PC-9 (cell line): ENCODE measurements at regions of chr10 and their contacts with region 1.

Region 1: DNA sequence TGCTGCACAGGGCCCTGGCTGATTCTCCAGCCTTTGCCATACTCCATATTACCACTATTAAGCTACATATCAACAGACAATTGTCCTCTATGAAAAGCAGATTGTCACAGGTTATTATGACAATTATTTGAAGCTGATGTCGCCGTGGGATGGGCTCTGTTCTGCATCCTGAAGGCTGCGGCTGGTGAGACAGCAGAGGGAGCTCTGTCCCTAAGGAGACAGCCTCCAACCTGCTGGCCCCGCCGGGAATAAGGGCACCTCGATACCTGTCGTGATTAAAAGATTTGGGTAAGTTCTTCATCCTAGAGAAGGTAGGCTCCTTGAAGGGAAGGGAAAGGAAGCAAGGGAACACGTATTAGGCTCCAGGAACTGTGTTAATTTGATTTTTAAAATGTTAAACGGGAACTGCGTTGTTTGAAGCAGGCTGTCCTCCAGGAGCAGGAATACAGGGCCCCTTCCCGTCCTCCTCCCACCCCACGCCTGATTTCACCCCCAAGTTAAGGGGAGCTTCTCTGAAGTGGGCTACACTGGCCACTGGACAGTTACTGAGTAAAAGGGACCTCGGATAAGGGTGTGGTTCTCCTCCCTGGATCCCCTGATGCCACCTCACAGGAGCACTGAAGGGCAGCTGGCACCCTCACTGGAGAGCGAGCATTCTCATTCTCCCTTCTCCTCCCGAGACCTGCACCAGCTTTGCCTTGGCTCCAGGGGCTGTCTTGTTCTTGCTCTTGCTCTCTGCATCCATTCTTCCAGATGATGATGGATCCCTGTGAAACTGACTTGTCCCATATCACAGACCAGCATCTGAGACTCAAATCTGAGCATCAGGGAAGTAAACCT is 11.8 kb upstream of the TIAL1 start:
- DNase-seq: peak; percentile 41 to 52
- H3K4me3 ChIP-seq: no peak overlapping the region
- H3K27ac ChIP-seq: no peak overlapping the region
- H3K4me1 ChIP-seq: no peaks in the 10 kb centered on the region
- H3K27me3 ChIP-seq: no peaks in the 10 kb centered on the region
- CTCF ChIP-seq: peak; percentile 71

Region 2: DNA sequence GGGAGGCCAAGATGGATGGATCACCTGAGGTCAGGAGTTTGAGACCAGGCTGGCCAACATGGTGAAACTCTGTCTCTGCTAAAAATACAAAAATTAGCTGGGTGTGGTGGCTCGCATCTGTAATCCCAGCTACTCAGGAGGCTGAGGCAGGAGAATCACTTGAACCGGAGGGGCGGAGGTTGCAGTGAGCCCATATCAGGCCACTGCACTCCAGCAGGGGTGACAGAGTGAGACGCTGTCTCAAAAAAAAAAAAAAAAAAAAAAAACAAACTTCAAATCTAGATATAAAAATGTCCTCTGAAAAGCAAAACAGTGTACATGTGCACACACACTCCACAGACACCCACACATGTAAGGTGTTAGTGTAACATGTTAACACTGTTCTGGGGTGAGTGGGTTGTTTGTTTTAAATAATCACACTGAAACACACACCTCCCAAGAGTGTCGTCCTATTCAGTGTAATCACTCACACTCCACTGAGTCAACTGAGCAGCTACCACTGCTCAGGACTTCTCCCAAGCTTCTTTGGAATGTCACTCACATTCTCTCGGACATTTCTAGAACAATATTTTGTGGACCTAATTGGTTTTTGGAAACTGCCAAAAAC is 53.3 kb before region 1 on chr10:
- CTCF ChIA-PET with region 1: no interaction called
- POLR2A ChIA-PET with region 1: no interaction called
- intact Hi-C with region 1: no loop called
- DNase-seq: no peak
- H3K4me3 ChIP-seq: no peak overlapping the region
- H3K27ac ChIP-seq: no peak overlapping the region
- H3K4me1 ChIP-seq: no peaks in the 10 kb centered on the region
- H3K27me3 ChIP-seq: no peaks in the 10 kb centered on the region
- CTCF ChIP-seq: no peak

Region 3: DNA sequence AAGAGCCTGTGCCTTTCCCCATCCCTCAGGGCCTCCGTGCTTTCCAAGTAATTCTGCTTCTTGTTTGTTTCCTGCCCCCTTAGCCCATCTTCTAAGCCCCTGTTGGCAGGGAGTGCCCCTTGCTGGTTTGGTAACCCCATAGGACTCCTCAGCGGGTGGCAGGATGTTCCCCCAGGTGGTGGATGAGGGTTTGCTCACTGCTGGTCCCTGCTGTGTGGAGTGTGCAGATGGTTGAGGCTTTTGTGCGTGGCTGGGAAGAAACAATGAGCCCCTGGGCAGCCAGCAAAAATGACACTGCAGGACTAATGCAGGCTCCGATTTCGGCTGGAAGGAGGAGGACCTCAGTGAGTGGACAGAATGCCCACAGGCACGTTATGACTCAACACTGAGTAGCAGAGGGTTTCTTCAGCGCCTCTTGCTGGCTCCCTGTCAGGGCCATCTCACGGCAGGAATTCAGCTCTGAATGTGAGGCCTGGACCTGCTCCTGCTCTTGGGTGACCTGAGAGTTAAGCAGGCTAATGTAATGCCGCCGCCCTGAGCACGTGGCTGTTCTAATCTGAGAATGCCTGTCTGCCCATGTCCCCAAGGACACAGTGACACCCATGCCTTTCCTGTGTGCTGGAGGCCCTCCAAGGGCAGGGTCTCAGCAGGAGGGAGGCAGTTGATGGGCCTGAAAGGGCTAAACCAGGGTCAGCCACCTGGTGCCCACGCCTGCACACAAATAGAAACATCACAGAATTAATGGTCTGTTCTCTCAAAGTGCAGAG is 59.2 kb after region 1 on chr10:
- CTCF ChIA-PET with region 1: no interaction called
- POLR2A ChIA-PET with region 1: no interaction called
- intact Hi-C with region 1: loop called (anchors 5 kb)
- DNase-seq: peak; percentile 88 to 93
- H3K4me3 ChIP-seq: peak overlapping the region; percentile 31; the same call in 1 of the 2 replicates
- H3K27ac ChIP-seq: peak overlapping the region; percentile 90
- H3K4me1 ChIP-seq: peaks cover 90% of the 10 kb centered on the region
- H3K27me3 ChIP-seq: no peaks in the 10 kb centered on the region
- CTCF ChIP-seq: no peak

Region 4: DNA sequence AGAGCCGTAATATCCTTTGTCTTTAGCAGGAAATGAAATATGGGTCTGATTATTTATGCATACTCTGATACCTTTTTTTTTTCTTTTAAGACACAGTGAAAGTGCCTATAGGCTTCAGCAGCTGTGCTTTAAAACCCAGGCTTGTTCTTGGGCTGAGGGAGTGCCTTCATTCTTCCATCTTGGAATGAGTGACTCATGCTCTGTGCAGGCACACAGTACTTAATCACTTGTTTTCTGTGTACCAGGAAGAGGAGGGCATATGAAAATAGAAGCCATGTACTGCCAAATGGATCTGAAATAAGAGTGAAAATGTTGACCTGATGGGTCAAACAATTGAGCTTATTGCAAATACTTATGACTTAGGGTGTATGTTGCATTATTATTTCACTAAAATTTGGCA is 129.3 kb after region 1 on chr10:
- CTCF ChIA-PET with region 1: no interaction called
- POLR2A ChIA-PET with region 1: interaction called, 3 read pairs
- intact Hi-C with region 1: loop called (anchors 5 kb)
- DNase-seq: peak; percentile 59 to 91
- H3K4me3 ChIP-seq: peak overlapping the region; percentile 32; the same call in 1 of the 2 replicates
- H3K27ac ChIP-seq: peak overlapping the region; percentile 80
- H3K4me1 ChIP-seq: peaks cover 40% of the 10 kb centered on the region
- H3K27me3 ChIP-seq: no peaks in the 10 kb centered on the region
- CTCF ChIP-seq: no peak

Region 5: DNA sequence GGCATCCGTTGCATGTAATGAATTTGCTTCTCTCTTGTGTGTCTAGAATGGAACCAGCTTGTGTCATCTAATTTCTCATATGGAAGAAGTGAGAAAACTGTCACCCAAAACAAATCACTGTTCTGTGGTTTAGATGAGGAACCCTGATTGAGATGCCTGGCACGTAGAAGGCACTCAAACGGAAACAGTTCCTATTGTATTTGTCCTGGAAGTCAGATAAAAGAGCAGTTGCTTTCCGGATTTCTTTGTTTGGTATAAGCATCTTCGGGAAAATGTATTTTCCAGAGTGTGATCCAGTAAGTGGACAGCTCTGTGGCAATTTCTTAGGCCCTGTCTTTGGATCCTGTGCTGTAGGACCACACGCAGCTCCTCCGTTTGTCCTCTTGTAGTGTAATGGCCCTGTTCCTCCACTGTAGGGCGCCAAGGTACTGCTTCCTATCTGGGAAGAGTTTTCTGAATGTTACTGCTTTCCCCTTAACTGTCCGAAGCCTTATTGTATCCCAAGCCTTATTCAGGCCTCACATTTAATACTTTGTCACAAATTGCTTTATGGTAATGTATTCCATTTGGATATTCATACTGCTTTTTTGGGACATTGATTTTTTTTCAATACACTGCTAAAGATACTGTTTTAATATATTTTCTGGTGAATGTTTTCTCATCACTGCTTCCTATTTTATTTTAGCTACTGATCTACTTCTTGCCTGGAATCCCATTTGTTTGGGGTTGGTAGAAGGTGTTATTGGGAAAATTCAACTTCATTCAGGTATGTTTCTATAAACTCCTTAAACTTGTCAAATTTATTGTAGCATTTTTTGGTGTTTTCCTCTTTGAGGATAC is 142.1 kb after region 1 on chr10:
- CTCF ChIA-PET with region 1: no interaction called
- POLR2A ChIA-PET with region 1: no interaction called
- intact Hi-C with region 1: loop called (anchors 1 kb)
- DNase-seq: peak; percentile 44 to 59
- H3K4me3 ChIP-seq: no peak overlapping the region
- H3K27ac ChIP-seq: no peak overlapping the region
- H3K4me1 ChIP-seq: no peaks in the 10 kb centered on the region
- H3K27me3 ChIP-seq: no peaks in the 10 kb centered on the region
- CTCF ChIP-seq: peak; percentile 79

Region 6: DNA sequence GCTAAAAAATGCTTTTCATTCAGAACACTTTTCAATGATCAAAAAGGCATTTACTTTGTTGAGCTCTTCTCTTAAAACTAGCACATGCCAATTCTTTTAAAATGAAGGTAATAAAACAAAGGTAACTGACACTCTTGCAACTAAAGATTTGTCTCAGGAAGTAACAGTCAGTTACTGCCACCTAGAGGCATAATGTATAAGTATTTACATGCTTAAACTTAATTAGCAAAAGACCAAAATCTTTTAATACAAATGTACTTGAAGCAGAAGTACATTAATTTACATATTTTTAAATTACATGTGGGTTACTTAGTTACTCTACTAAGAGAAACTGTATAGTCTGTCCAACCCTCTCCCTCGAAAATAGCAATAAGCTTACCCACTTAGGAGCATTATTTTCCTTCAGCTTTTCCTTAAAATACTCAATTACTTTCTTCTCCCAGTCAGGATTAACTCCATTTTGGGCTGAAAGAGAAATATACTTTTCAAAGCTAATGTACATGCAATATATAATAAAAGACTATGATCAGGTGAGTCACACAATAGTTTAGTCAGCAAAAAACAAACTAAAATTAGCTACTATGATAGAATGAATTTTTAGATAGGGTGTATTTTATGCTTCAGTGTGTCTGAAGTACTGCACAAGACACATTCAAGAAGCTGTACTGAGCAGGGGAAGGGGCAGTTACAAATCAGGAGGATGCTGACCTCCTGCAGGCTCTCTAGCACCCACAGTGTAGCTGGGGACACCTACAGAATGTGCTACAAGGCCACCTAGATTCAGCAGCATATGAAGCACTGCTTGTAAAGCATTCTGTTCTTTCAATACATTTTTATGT is 251.1 kb after region 1 on chr10:
- CTCF ChIA-PET with region 1: interaction called, 5 read pairs
- POLR2A ChIA-PET with region 1: no interaction called
- intact Hi-C with region 1: loop called (anchors 1 kb)
- DNase-seq: no peak
- H3K4me3 ChIP-seq: no peak overlapping the region
- H3K27ac ChIP-seq: peak overlapping the region; percentile 19; the same call in 1 of the 2 replicates
- H3K4me1 ChIP-seq: no peaks in the 10 kb centered on the region
- H3K27me3 ChIP-seq: no peaks in the 10 kb centered on the region
- CTCF ChIP-seq: peak; percentile 76

Region 7: DNA sequence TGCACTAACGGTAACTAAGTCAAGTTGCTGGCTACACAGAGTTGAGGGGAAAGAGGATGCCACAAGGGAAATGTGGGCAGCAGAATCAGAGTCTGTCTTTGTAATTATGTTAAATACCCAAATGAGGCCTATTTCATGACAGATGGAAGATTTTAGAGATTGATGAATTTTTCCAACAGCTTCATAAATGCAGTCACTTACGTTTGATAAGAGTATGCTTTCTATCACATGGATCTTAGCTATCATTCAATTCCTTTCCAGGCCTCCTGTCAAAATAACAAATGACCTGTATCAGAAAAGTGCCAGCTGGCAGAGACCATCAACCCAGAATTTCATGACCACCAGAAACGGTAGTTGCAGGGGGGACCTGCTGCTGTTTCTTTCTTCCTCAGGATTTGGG is 700.1 kb after region 1 on chr10:
- CTCF ChIA-PET with region 1: no interaction called
- POLR2A ChIA-PET with region 1: no interaction called
- intact Hi-C with region 1: no loop called
- DNase-seq: no peak
- H3K4me3 ChIP-seq: no peak overlapping the region
- H3K27ac ChIP-seq: no peak overlapping the region
- H3K4me1 ChIP-seq: no peaks in the 10 kb centered on the region
- H3K27me3 ChIP-seq: no peaks in the 10 kb centered on the region
- CTCF ChIP-seq: no peak